PC-9 (cell line): ENCODE measurements at regions of chr1 and their contacts with region 1.

Region 1: GRCh38 chr1:74733604-74734484 is 892 bp downstream of the TYW3 start:
- DNase-seq: peak; percentile 26 to 79
- H3K4me3 ChIP-seq: peak overlapping the region; percentile 95
- H3K27ac ChIP-seq: peak overlapping the region; percentile 84
- H3K4me1 ChIP-seq: peaks cover 25% of the 10 kb centered on the region
- H3K27me3 ChIP-seq: no peaks in the 10 kb centered on the region
- CTCF ChIP-seq: peak; percentile 89

Region 2: GRCh38 chr1:74689621-74690363 is 44.1 kb before region 1 on chr1:
- CTCF ChIA-PET with region 1: no interaction called
- POLR2A ChIA-PET with region 1: no interaction called
- intact Hi-C with region 1: loop called (anchors 5 kb)
- DNase-seq: peak; percentile 43 to 67
- H3K4me3 ChIP-seq: no peak overlapping the region
- H3K27ac ChIP-seq: no peak overlapping the region
- H3K4me1 ChIP-seq: peaks cover 12% of the 10 kb centered on the region
- H3K27me3 ChIP-seq: no peaks in the 10 kb centered on the region
- CTCF ChIP-seq: peak; percentile 95